ENCODE measurements at regions of chr6 and their contacts with region 1.

Region 1: DNA sequence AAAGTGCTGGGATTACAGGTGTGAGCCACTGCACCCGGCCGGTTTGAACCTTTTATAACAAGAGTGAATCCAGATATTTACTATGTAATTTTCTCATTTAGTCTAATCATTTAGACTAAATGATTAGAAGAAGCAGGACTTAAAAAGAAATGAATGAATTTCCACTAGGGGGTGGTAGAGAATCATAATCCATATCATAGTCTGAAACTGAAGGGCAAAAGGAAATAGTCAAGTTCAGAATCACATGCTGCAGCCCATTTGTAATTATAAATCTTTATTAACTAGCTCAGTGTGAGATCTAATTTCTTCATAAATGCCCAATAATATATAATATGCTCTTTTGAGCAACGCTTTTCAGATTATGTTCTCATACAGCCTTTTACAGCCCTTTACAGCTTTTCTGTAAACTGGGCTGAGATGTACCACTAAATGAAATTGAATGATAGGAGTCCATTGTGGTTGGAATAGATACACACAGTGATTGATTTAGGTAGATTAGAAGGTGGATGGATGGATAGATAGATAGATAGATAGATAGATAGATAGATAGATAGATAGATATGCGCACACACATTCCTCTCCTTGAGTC is 31.8 kb downstream of the PSMB9 start:
- DNase-seq: no peak
- ATAC-seq: peak; percentile 66 to 88 (median 76)
- H3K4me3 ChIP-seq: no peak overlapping the region
- H3K27ac ChIP-seq: no peak overlapping the region
- H3K4me1 ChIP-seq: no peaks in the 10 kb centered on the region
- H3K27me3 ChIP-seq: no peaks in the 10 kb centered on the region
- CTCF ChIP-seq: peak; percentile 61 to 69 (median 66)
- POLR2A ChIP-seq: no peak

Region 2: GRCh38 chr6:32933636-32934085 is 47.9 kb after region 1 on chr6:
- intact Hi-C with region 1: loop called in 1 of 2 experiments (anchors 10 kb)
- DNase-seq: peak; percentile 73 to 77 (median 77)
- ATAC-seq: peak; percentile 78 to 90 (median 82)
- H3K4me3 ChIP-seq: no peak overlapping the region
- H3K27ac ChIP-seq: no peak overlapping the region
- H3K4me1 ChIP-seq: no peaks in the 10 kb centered on the region
- H3K27me3 ChIP-seq: no peaks in the 10 kb centered on the region
- CTCF ChIP-seq: peak; percentile 75 to 90 (median 83)
- POLR2A ChIP-seq: no peak

Region 3: GRCh38 chr6:32947552-32948465 is 62.0 kb after region 1 on chr6:
- intact Hi-C with region 1: loop called in 1 of 2 experiments (anchors 5 kb)
- DNase-seq: no peak
- ATAC-seq: peak; percentile 48 to 75 (median 70)
- H3K4me3 ChIP-seq: no peak overlapping the region
- H3K27ac ChIP-seq: no peak overlapping the region
- H3K4me1 ChIP-seq: no peaks in the 10 kb centered on the region
- H3K27me3 ChIP-seq: no peaks in the 10 kb centered on the region
- CTCF ChIP-seq: peak; percentile 49 to 60 (median 58)
- POLR2A ChIP-seq: no peak

Region 4: GRCh38 chr6:32971581-32972352 is 86.0 kb after region 1 on chr6:
- intact Hi-C with region 1: no loop called
- DNase-seq: peak; percentile 99 to 100 (median 100)
- ATAC-seq: peak; percentile 50 to 62 (median 54)
- H3K4me3 ChIP-seq: peak overlapping the region; percentile 90 to 97 (median 95)
- H3K27ac ChIP-seq: peak overlapping the region; percentile 100
- H3K4me1 ChIP-seq: peaks cover 0 to 25% (median 10%) of the 10 kb centered on the region in 4 donors
- H3K27me3 ChIP-seq: no peaks in the 10 kb centered on the region
- CTCF ChIP-seq: no peak
- POLR2A ChIP-seq: peak; percentile 97

Measured in right lobe of liver (tissue), 6 donors.